Activated B cell treated with CpG ODN at 0.5 μM for 24 hours (primary cell): ENCODE measurements at regions of chr3 and their contacts with region 1.

Region 1: GRCh38 chr3:52851348-52851747 is 16.5 kb upstream of the MUSTN1 start:
- DNase-seq: no peak
- ATAC-seq: peak; percentile 71
- H3K4me3 Mint-ChIP-seq: no peak overlapping the region
- H3K27ac Mint-ChIP-seq: no peak overlapping the region
- H3K4me1 Mint-ChIP-seq: no peaks in the 10 kb centered on the region
- H3K27me3 Mint-ChIP-seq: no peaks in the 10 kb centered on the region
- CTCF ChIP-seq: no peak

Region 2: GRCh38 chr3:52934630-52935530 is 83.5 kb after region 1 on chr3:
- CTCF ChIA-PET with region 1: interaction called, 3 read pairs
- POLR2A ChIA-PET with region 1: no interaction called
- intact Hi-C with region 1: loop called (anchors 2 kb)
- DNase-seq: no peak
- ATAC-seq: peak; percentile 87
- H3K4me3 Mint-ChIP-seq: no peak overlapping the region
- H3K27ac Mint-ChIP-seq: peak overlapping the region; percentile 22
- H3K4me1 Mint-ChIP-seq: peaks cover 25% of the 10 kb centered on the region
- H3K27me3 Mint-ChIP-seq: no peaks in the 10 kb centered on the region
- CTCF ChIP-seq: peak; percentile 58